PC-9 (cell line): ENCODE measurements at regions of chr1 and their contacts with region 1.

Region 1: DNA sequence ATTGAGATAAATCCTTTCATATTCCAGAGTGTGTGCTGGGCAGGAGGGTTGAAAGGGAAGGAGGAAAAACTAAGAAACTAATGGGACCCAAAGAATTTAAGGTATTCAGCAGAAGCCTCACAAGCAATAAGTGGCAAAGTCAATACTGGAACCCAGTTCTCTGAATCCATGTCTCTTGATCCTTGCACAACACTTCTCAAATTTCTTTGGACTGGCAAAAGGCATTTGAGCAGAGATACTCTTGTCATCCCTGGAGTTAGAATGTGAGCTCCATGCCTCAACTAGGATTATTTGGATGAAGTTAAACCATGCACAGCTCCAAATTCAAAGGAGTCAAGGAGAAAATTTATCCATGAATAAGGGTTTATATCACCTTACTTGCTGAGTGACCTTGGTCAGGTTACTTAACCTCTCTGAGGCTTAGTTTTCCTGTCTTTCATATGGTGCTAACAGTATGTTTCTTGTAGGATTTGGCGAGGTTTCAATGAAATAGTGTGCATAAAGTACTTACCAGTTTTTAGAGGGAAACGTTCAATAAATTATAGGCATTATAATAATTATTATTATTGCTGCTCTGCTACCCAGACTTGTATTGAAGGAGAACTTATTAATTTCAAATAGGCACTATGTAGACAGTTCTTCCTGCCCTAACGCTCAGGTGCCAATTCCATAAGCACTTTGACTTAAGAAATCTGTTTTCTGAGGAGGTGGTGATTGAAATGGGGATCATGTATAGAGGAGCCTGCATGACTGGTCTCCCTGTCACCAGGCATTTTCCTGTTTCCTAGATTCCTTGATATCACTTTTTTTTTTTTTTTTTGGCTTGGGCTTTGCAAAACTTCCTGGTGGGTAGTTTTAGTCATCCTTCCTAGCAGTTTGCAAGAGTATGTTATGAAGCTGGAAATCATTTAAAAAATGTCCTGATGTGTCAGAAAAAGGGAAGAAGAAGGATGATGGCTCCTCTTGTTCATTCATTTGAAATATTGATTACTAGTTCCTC is 125.0 kb upstream of the JUN start:
- DNase-seq: peak; percentile 43 to 93
- H3K4me3 ChIP-seq: no peak overlapping the region
- H3K27ac ChIP-seq: peak overlapping the region; percentile 60
- H3K4me1 ChIP-seq: peaks cover 60% of the 10 kb centered on the region
- H3K27me3 ChIP-seq: no peaks in the 10 kb centered on the region
- CTCF ChIP-seq: no peak

Region 2: DNA sequence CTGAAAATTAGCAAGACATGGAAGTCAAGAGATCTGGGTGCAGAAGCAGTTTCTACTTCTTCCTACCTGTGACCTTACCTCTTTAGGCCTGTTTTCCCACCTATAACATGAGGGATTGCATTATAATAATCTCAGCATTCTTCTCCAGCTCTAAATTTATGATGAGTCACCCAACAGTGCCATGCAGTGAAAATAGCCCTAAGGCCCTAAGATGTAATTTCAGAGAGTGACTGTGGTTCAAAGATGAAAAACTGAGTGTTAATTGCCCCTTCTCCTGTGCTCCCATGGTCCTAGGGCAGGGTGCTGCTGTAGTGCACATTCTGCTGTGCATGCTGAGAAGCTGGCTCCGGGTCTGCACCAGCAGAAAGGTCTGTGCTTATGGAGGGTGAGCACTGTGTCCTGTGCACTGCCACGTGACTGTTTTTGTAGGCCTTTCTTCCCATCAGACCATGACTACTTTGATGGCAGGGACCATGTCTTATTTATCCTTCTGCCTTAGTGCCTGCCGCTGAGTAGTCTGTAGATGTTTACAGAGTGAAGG is 154.7 kb before region 1 on chr1:
- CTCF ChIA-PET with region 1: no interaction called
- POLR2A ChIA-PET with region 1: interaction called, 26 read pairs
- intact Hi-C with region 1: no loop called
- DNase-seq: peak; percentile 6 to 72
- H3K4me3 ChIP-seq: no peak overlapping the region
- H3K27ac ChIP-seq: peak overlapping the region; percentile 66
- H3K4me1 ChIP-seq: peaks cover 41% of the 10 kb centered on the region
- H3K27me3 ChIP-seq: no peaks in the 10 kb centered on the region
- CTCF ChIP-seq: no peak

Region 3: GRCh38 chr1:58874757-58875755 is 33.8 kb before region 1 on chr1:
- CTCF ChIA-PET with region 1: no interaction called
- POLR2A ChIA-PET with region 1: no interaction called
- intact Hi-C with region 1: no loop called
- DNase-seq: peak; percentile 84 to 98
- H3K4me3 ChIP-seq: no peak overlapping the region; the same call in 1 of the 2 replicates
- H3K27ac ChIP-seq: peak overlapping the region; percentile 92
- H3K4me1 ChIP-seq: peaks cover 48% of the 10 kb centered on the region
- H3K27me3 ChIP-seq: no peaks in the 10 kb centered on the region
- CTCF ChIP-seq: no peak

Region 4: DNA sequence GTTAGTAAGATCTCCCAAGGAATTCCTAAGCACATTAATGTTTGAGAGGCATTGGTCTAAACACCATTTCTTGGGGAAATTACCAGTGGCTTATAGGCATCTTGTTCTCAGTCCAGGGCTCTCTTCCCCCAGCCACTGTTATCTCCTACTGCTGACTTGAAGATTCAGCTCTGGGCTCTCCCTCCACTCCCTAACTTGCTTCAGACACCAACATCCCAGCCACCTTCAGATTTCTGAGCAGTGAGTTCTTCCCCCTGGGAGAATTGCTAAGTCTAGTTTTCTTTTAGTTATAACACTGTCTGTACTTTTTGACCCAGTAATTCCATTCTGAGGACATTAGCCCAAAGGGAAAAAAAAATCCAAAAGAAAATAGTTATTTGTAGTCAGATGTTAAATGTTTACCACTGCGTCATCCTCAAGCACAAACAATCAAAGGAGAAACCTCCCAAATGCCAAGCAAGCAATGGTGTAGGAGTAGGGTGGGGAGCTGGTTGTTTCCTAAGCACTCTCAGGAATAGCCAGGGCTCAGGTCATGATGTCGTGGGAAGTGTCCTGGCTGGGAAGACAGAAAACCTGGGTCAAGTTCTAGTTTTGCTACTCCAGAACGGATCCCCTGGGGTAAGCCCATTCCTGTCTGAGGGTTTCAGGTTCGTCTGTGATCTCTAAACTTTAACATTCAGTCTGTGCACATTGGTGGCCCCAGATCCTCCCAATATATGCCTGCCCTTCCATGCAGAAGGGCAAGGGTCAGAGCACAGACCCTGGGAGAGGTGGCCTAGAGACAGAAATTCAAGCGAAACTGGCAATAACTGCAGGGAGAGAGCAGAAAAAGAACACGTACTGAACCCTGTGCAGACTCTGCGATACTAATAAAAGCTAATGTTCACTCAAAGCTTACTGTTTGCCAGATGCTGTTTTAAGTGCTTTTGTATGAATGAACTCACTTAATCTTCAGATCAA is 197.0 kb after region 1 on chr1:
- CTCF ChIA-PET with region 1: no interaction called
- POLR2A ChIA-PET with region 1: interaction called, 12 read pairs
- intact Hi-C with region 1: no loop called
- DNase-seq: no peak
- H3K4me3 ChIP-seq: no peak overlapping the region
- H3K27ac ChIP-seq: no peak overlapping the region
- H3K4me1 ChIP-seq: no peaks in the 10 kb centered on the region
- H3K27me3 ChIP-seq: no peaks in the 10 kb centered on the region
- CTCF ChIP-seq: no peak